Activated T-helper 2 cell treated with anti-CD3 and anti-CD28 coated beads, Interferon-gamma antibody, Interleukin-2, Interleukin-4, amounts not matched to agents 10 μg/mL and 5 μg/mL and 100 μg/mL, durations not matched to agents 14 hours and 24 hours and 36 hours (primary cell): ENCODE measurements at regions of chr1 and their contacts with region 1.

Region 1: GRCh38 chr1:9874959-9875635 is 35.0 kb downstream of the CTNNBIP1 start:
- DNase-seq: peak; percentile 64
- H3K4me3 Mint-ChIP-seq: no peak overlapping the region
- H3K27ac Mint-ChIP-seq: no peak overlapping the region
- H3K4me1 Mint-ChIP-seq: peaks cover 5% of the 10 kb centered on the region
- H3K27me3 Mint-ChIP-seq: no peaks in the 10 kb centered on the region

Region 2: DNA sequence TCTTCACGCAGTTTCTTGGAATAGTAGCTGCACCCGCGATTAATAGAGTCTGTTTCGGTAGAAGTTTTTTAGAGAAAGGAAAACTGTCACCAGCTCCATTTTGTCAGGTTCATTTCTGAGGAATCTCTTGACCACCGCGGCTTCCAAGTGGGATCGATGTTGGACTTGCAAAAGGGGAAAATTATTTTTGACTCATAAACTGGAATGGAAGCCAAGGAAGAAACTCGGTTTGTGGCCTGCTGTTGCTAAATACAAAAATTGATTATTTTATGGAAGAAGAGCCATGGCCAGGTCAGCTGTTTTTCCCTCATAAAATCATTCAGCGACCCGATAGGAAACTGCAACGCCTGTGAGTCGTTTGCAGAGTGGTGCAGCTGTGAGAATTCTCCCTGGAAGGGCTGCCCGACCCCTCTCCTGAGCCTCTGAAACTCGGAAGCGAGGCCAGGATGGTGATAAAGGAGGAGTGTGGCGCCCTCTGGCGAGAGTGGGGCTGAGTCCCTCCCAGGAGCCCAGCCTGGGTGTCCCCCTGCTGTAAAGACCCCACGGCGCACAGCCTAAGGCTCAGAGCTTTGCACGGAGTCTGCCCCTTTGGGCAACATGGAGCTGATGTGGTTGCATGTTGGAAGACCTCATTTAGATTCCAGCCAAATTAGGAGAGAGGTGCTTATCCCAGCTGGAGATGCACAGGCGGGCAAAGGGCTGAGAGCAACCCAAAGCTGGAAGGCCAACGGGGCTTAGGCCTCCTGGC is 419.4 kb before region 1 on chr1:
- intact Hi-C with region 1: no loop called
- DNase-seq: peak; percentile 37
- H3K4me3 Mint-ChIP-seq: no peak overlapping the region
- H3K27ac Mint-ChIP-seq: no peak overlapping the region
- H3K4me1 Mint-ChIP-seq: no peaks in the 10 kb centered on the region
- H3K27me3 Mint-ChIP-seq: peaks cover 9% of the 10 kb centered on the region

Region 3: DNA sequence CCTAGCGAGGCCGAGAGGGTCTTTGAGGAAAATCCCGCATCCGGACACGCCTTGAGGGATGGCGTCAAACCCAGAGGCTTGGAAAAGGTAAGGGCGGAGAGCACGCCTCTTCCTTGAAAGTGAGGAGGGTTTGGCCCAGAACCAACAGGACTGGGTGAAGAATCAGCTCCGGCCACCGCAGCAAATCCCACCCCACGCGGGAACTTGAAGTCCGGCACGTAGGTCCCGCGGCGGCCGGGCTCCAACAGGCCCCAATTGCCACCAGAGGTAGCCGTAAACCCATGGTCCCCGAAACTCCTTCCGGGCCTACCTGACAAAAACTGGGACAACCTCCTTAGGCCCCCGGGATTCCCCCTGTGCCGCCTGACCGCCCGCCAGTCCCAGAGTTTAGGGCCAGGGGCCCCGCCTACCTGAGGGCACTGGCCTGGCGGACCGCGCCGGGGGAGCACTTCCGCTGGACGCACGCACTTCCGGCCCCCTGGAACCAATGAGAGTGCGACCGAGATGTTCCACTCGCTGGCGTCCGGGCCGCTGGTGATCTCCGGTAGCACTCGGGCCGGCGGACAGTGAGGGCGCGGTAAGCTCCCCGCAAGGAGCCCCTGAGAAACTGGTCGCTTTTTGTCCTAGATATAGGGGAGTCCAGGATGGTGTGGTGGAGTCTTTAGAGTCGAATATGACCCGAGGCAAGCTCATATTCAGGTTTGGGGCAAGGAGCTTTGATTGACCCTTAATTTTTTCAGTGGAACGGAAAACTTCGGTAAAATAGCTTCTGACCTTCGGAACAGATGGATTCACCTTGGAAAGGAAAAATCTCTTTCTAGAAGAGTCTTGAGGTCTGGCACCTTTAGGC is 68.1 kb after region 1 on chr1 and contains the starts of genes LZIC and NMNAT1:
- intact Hi-C with region 1: loop called (anchors 1 kb)
- DNase-seq: peak; percentile 88
- H3K4me3 Mint-ChIP-seq: peak within 1 kb of the TSS; percentile 99
- H3K27ac Mint-ChIP-seq: peak within 1 kb of the TSS; percentile 98
- H3K4me1 Mint-ChIP-seq: peaks cover 13% of the 10 kb centered on the region
- H3K27me3 Mint-ChIP-seq: no peaks in the 10 kb centered on the region
- total RNA-seq, gene LZIC: 30.0 and 31.1 TPM in 2 replicates
- total RNA-seq, gene NMNAT1: 6.8 TPM in 2 replicates

Region 4: DNA sequence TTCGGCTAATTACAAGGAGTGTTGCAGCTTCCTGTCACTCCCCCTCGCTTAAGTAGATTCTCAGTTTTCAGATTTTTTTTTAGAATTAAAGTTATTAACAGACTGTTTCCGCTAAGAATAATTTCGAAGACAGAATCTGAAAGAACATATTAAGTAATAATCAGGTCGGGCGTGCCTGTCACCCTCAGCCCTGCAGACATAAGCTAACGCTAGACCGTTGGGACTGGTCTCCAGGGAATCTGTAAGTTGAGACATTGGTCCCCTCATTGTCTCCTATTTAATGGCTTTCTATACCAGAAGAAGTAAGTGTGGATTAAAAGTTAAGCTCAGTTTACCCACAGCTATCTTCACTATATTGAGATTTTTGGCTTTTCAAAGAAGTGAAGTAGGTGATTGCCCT is 82.6 kb after region 1 on chr1:
- intact Hi-C with region 1: no loop called
- DNase-seq: no peak
- H3K4me3 Mint-ChIP-seq: no peak overlapping the region
- H3K27ac Mint-ChIP-seq: no peak overlapping the region
- H3K4me1 Mint-ChIP-seq: no peaks in the 10 kb centered on the region
- H3K27me3 Mint-ChIP-seq: no peaks in the 10 kb centered on the region

Region 5: GRCh38 chr1:10032590-10033358 is 157.7 kb after region 1 on chr1 and contains the start of gene UBE4B:
- intact Hi-C with region 1: loop called (anchors 2 kb)
- DNase-seq: peak; percentile 99
- H3K4me3 Mint-ChIP-seq: peak within 1 kb of the TSS; percentile 96
- H3K27ac Mint-ChIP-seq: peak within 1 kb of the TSS; percentile 93
- H3K4me1 Mint-ChIP-seq: peaks cover 16% of the 10 kb centered on the region
- H3K27me3 Mint-ChIP-seq: no peaks in the 10 kb centered on the region
- total RNA-seq, gene UBE4B: 37.2 and 37.7 TPM in 2 replicates

Region 6: DNA sequence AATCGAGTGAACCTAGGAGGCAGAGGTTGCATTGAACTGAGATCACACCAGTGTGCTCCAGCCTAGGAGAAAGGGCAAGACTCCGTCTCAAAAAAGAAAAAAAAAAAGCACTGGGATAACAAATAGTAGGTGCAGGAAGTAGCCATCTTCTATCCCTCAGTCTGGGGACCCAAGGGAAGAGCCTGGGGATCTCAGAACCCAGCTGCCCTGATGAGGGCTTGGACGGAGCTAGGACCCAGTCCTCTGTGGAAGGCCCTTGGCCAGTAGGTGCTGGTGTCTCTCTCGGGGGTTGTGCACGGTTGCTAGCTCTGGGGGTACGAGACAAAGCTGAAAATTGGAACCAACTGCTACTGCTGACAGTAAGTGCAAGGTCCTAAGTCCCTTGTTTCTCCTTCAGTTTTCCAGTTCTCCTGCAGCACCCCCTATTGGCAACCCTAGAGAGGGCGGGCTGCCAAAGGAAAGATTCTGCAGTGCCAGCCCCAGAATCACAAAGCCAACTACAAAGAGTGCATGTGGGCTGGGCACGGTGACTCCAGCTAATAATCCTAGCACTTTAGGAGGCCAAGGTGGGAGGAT is 277.7 kb after region 1 on chr1:
- intact Hi-C with region 1: loop called (anchors 10 kb)
- DNase-seq: no peak
- H3K4me3 Mint-ChIP-seq: no peak overlapping the region
- H3K27ac Mint-ChIP-seq: no peak overlapping the region
- H3K4me1 Mint-ChIP-seq: no peaks in the 10 kb centered on the region
- H3K27me3 Mint-ChIP-seq: no peaks in the 10 kb centered on the region